ENCODE measurements at regions of chr12 and their contacts with region 1.

Region 1: DNA sequence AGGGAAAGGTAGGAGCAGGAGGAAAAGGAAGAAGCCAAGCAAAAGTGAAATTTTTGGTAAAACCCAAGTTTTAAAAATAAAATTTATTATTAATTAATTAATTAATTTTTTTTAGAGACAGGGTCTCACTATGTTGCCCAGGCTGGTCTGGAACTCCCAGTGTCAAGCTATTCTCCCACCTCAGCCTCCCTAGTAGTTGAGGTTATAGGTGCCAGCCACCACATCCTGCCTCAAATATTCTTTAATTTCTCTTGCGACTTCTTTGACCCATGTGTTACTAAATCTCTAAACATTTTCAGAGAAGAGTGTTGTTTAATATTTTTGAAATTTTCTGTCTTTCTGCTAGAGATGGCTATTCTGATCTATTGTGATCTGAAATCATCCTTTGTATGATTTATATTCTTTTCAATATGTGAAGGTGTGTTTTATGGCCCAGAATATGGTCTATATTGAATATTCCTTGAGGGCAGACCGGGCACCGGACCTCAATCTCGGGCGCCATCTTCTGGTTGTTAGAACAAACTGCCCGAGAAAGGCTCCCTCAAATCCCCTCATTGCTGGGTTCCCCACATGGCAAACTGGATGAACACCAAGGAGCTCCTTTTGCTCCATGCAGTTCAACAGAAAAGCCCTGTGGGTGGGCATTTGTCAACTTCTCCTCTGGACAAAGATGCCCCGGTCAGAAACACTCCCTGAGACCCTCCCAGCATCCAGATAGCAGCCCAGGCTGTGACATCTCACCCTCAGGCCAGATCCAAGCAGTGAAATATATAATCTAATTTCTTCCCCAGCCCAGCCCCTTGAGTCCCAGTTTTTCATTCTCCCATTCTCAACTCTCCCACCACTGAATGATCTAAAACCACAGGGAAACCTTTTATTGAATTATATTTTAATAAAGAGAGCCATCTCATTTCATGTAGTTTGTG is 110.5 kb downstream of the ASCL4 start:
- DNase-seq: peak in 1 of 3 donors; percentile 59
- ATAC-seq: peak in 1 of 2 donors; percentile 58
- H3K4me3 ChIP-seq: no peak overlapping the region
- H3K27ac ChIP-seq: no peak overlapping the region
- H3K4me1 ChIP-seq: no peaks in the 10 kb centered on the region
- H3K27me3 ChIP-seq: peaks cover 3% of the 10 kb centered on the region

Region 2: GRCh38 chr12:107679336-107679735 is 205.7 kb before region 1 on chr12:
- intact Hi-C with region 1: loop called in 3 of 4 experiments (anchors 5 kb)
- DNase-seq: no peak
- ATAC-seq: no peak
- H3K4me3 ChIP-seq: no peak overlapping the region
- H3K27ac ChIP-seq: no peak overlapping the region
- H3K4me1 ChIP-seq: no peaks in the 10 kb centered on the region
- H3K27me3 ChIP-seq: no peaks in the 10 kb centered on the region

Region 3: DNA sequence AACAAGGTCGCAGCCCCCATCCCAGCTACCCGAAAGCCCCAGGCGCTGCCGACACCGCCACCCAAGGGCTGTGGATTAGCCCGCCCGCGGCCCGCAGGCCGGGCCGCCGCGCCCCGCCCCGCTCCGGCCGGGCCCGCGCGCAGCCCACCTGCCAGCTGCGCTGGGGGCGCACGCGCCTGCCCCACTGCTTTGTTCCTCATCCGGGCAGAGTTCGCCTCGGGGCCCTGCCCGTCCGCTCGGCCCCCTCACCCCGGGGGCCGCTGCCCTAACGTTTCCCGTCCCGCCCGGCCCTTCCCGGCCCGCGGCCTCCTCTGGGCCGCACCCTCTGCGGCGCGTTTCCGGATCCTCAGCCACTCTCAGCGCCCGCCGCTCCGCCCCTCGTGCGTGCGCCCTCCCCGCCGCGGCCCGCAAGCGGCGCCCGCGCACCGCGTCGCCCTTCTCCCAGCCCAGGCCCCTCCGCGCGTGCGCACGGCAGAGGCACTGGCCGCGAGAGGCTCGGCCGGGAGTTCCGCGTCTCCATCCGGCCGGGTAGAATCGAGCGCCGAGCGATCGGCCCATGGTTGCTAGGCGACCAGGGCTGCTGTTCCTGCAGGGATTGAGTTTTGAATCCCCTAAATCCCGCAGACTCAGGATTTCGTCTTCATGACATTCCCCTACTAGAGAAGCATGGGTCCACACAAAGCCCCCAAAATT is 124.1 kb before region 1 on chr12 and contains the start of gene PRDM4:
- intact Hi-C with region 1: loop called in 1 of 4 experiments (anchors 5 kb)
- DNase-seq: peak; percentile 95 to 98 (median 98)
- ATAC-seq: peak; percentile 99
- H3K4me3 ChIP-seq: peak within 1 kb of the TSS; percentile 97
- H3K27ac ChIP-seq: peak within 1 kb of the TSS; percentile 43
- H3K4me1 ChIP-seq: peaks cover 3% of the 10 kb centered on the region
- H3K27me3 ChIP-seq: no peaks in the 10 kb centered on the region
- total RNA-seq, gene PRDM4: 11.6 to 14.9 (median 14.0) TPM